Adrenal gland (tissue), 19 donors: ENCODE measurements at regions of chr5 and their contacts with region 1.

Region 1: GRCh38 chr5:108260117-108260857 is 121.6 kb downstream of the FBXL17 start:
- DNase-seq: peak; percentile 65 to 90 (median 80)
- H3K4me3 ChIP-seq: no peak overlapping the region
- H3K27ac ChIP-seq: no peak overlapping the region
- H3K4me1 ChIP-seq: peaks cover 0 to 11% of the 10 kb centered on the region in 2 donors
- H3K27me3 ChIP-seq: no peaks in the 10 kb centered on the region
- CTCF ChIP-seq: peak; percentile 79 to 97 (median 89)
- POLR2A ChIP-seq: no peak

Region 2: DNA sequence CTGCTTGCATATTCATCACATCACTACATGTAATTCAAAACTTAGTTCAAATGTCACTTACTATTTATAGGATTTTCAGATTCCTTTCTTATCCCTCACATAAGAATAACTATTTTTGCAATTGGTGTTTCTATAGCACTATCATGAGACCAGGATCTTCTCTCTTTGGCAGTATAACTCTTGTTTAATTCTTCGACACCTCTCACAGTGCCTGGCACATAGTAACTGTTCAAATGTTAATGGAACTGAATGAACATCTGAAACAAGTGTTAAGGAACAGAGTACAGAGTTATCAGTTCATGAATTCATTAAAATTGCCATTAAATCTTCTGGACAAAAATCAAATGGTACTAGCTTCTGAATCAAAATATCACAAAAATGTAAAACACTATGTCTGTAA is 81.6 kb after region 1 on chr5:
- intact Hi-C with region 1: loop called in 1 of 2 experiments (anchors 5 kb)
- DNase-seq: no peak
- H3K4me3 ChIP-seq: no peak overlapping the region
- H3K27ac ChIP-seq: no peak overlapping the region
- H3K4me1 ChIP-seq: no peaks in the 10 kb centered on the region
- H3K27me3 ChIP-seq: no peaks in the 10 kb centered on the region
- CTCF ChIP-seq: no peak
- POLR2A ChIP-seq: no peak

Region 3: DNA sequence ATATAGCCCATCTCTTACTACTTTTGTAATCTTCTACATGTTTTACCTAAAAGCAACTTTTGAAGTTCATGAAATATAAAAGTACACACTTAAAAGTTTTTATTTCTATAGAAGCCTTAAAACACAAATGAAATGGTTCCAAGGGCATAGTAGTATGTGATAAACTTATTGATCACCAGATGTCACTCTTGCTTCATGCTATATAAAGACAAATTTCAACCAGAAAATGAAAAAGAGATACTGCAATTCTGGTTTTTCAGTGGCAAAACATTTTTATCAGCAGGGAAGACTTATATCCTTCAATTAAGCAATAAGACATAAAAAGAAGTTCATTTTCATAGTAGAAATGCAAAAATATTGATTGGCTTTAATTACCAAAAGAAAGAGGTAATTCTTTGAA is 191.0 kb after region 1 on chr5:
- intact Hi-C with region 1: no loop called
- DNase-seq: no peak
- H3K4me3 ChIP-seq: no peak overlapping the region
- H3K27ac ChIP-seq: no peak overlapping the region
- H3K4me1 ChIP-seq: no peaks in the 10 kb centered on the region
- H3K27me3 ChIP-seq: no peaks in the 10 kb centered on the region
- CTCF ChIP-seq: no peak
- POLR2A ChIP-seq: no peak

Region 4: DNA sequence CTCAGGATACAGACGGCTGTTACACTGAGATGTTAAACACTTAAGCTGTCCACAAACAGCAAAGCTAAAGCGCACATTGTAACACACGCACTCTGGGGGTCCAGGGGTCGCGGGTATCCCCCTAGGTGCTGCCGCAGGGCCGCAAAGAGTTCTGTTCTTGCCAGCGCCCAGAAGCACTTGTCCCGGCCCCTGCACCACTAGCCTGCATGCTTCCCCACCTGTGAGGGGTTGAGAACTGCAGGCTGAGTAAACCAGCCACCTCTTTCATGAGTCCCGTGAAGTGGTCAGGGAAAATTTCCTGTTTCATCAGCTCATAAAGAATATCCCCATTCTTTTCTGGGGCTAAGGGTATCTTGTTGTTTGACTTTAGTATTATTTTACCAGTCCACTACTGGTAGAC is 276.0 kb after region 1 on chr5:
- intact Hi-C with region 1: no loop called
- DNase-seq: no peak
- H3K4me3 ChIP-seq: no peak overlapping the region
- H3K27ac ChIP-seq: no peak overlapping the region
- H3K4me1 ChIP-seq: no peaks in the 10 kb centered on the region
- H3K27me3 ChIP-seq: no peaks in the 10 kb centered on the region
- CTCF ChIP-seq: no peak
- POLR2A ChIP-seq: no peak

Region 5: GRCh38 chr5:108548684-108549596 is 288.7 kb after region 1 on chr5:
- intact Hi-C with region 1: no loop called
- DNase-seq: no peak
- H3K4me3 ChIP-seq: no peak overlapping the region
- H3K27ac ChIP-seq: no peak overlapping the region
- H3K4me1 ChIP-seq: no peaks in the 10 kb centered on the region
- H3K27me3 ChIP-seq: no peaks in the 10 kb centered on the region
- CTCF ChIP-seq: no peak
- POLR2A ChIP-seq: no peak

Region 6: GRCh38 chr5:108634617-108635288 is 374.5 kb after region 1 on chr5:
- intact Hi-C with region 1: no loop called
- DNase-seq: no peak
- H3K4me3 ChIP-seq: no peak overlapping the region
- H3K27ac ChIP-seq: no peak overlapping the region
- H3K4me1 ChIP-seq: no peaks in the 10 kb centered on the region
- H3K27me3 ChIP-seq: no peaks in the 10 kb centered on the region
- CTCF ChIP-seq: no peak
- POLR2A ChIP-seq: no peak